Dendritic cell treated with granulocyte-macrophage colony-stimulating factor and Interleukin-4, amounts not matched to agents 40 ng/mL and 50 ng/mL, for 4 days (primary cell): ENCODE measurements at regions of chr5 and their contacts with region 1.

Region 1: DNA sequence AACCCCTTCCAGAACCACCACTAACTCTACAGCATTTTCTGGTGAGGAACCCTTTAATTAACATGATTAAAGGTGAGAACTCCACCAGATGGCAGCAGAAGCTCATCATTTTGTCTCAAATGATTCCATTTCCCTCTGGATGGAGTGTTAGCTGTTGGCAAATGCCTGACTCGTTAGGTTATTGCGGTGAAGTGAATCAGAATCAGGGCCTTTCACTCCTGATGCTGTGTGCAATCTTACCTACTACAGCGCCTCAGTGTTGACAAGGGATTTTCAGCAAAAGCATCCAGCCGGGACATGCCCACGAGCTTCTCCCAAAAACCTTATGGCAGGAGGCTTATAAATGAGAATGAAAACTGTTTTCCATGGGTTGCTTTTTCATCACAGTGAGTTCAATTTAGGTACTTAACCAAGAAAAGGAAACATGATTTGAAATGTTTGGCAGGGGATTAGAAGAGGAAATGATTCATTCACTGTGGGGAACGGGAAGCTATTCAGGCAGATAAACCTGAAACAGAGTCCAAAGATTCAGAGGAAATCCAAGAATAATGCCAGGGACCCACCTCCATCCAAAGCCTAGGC is 48.0 kb upstream of the CAST start:
- H3K4me3 Mint-ChIP-seq: no peak overlapping the region
- H3K27ac Mint-ChIP-seq: no peak overlapping the region
- H3K4me1 Mint-ChIP-seq: peaks cover 16% of the 10 kb centered on the region
- H3K27me3 Mint-ChIP-seq: peaks cover 2% of the 10 kb centered on the region

Region 2: DNA sequence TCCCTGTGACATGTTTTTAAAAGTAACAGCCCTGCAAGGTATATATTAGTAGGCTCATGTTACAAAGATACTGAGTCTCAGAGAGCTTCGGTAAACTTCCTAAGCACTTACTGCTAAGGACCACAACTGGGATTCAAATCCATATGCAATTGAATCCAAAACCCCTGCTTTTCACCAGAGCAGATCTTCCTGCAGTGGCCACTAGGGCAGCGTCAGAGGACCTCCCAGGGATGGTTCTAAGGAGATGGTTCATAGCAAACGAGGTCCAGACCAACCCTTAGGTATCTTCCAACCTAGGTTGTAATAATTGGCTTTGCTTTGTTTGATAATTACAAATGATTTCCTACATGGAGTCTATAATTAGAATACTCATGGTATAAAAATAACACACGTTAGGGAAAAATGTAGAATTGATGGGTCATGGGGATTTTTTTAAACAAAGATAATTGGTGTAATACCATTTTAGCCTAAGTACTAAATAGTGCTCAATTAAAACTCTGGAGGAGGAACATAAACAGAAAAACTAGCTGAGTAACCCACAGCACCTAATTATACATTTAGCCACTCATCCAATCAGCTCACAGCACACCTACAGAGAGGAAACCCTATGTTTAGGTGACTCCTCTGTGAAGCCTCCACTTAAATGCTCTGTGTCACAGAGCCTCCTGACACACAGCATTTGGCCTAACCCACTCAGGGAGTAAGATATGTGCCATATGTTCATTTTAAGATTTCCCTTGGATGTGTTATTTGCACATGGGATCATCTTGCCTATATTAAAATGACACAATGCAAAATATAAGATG is 38.0 kb after region 1 on chr5:
- intact Hi-C with region 1: no loop called
- H3K4me3 Mint-ChIP-seq: no peak overlapping the region
- H3K27ac Mint-ChIP-seq: peak overlapping the region; percentile 45
- H3K4me1 Mint-ChIP-seq: peaks cover 69% of the 10 kb centered on the region
- H3K27me3 Mint-ChIP-seq: no peaks in the 10 kb centered on the region

Region 3: DNA sequence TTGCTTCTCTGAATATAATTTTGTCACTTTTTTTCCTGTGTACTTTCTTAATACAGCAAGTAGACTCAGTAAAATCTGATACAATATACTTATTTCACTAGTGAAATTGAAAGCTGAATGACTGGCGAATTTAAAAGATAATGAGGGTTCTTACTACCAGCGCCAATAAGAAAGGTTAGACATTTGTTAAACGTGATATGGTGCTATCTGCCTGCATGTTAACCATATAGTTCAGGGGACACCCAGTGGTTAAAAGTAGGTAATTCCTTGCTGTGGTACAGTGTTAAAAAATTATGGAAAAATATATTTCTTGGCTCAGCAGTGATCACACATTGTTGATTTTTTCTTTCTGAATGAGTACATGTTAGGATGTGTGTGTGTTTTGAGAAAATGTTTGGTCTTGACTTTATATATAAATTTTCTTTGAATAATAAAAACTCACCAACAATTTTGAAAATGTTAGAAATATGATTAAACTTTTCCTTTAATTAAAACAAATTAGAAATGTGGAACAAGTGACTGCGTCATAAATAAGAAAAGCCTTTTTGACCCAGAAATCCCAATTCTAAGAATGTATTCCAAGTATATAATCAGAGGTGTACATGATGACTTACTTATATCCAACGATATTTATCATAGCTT is 73.7 kb after region 1 on chr5:
- intact Hi-C with region 1: loop called (anchors 2 kb)
- H3K4me3 Mint-ChIP-seq: no peak overlapping the region
- H3K27ac Mint-ChIP-seq: no peak overlapping the region
- H3K4me1 Mint-ChIP-seq: peaks cover 29% of the 10 kb centered on the region
- H3K27me3 Mint-ChIP-seq: no peaks in the 10 kb centered on the region

Region 4: DNA sequence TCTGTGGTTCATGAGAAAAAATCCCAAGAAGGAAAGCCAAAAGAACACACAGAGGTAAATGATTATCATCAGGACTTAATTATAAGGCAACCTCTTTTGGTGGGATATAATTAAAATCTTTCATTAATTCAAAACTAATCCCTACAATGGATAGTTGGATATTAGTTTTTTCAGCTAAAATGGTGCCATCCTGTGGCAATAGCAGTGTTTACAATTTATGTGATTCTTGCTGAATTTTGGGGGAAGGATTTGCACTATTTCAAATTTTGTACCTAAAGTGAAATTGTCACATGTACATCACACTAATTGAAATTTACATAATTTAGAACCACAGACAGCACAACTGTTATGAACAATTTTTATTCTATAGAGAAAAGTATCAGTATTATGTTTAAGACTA is 115.0 kb after region 1 on chr5:
- intact Hi-C with region 1: loop called (anchors 1 kb)
- H3K4me3 Mint-ChIP-seq: no peak overlapping the region
- H3K27ac Mint-ChIP-seq: no peak overlapping the region
- H3K4me1 Mint-ChIP-seq: peaks cover 5% of the 10 kb centered on the region
- H3K27me3 Mint-ChIP-seq: no peaks in the 10 kb centered on the region

Region 5: GRCh38 chr5:97167435-97167834 is 553.2 kb after region 1 on chr5:
- intact Hi-C with region 1: loop called (anchors 5 kb)
- H3K4me3 Mint-ChIP-seq: peak overlapping the region; percentile 56
- H3K27ac Mint-ChIP-seq: peak overlapping the region; percentile 81
- H3K4me1 Mint-ChIP-seq: peaks cover 7% of the 10 kb centered on the region
- H3K27me3 Mint-ChIP-seq: no peaks in the 10 kb centered on the region